ENCODE measurements at regions of chr6 and their contacts with region 1.

Region 1: DNA sequence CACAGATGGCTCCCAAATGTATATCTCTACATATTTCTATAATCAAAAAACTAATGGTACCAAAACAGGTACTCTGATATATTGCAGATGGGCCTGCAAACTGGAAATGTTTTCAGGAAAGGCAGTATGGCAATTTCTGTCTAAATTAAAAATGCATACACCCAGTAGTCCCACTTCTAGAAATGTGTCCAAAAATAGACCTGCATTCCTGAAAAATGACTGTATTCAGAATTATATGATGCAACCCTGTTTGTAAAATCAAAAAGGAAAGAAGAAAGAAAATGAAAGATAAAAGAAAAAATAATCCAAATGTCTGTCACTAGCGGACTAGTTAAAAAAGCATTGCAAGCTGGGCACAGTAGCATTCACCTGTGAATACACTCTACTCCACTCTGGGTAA is 12.9 kb upstream of the MICB start:
- DNase-seq: no peak
- ATAC-seq: no peak

Region 2: DNA sequence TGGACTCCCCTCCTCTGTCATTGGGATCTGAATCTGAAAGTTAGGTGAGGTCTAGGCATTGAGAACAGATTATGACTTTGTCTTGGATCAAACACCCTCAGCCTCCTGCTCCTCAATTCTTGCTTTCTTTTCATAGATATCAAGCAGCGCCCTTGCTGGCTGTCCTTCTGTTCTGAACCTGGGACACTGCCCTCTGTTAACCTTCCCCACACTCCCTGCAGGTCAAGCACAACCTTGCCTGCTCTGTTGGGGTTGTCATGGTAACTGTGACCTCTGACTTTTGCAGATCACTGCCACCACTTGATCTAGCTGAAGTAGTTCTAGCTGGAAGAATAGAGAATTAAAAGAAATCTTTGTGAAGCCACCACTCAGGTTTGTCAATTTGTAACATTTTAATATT is 98.1 kb before region 1 on chr6:
- intact Hi-C with region 1: loop called (anchors 5 kb)
- DNase-seq: no peak
- ATAC-seq: no peak